ENCODE measurements at regions of chr20 and their contacts with region 1.

Region 1: GRCh38 chr20:47296950-47297349 is 59.5 kb downstream of the ZMYND8 start:
- DNase-seq: no peak
- H3K4me3 ChIP-seq: no peak overlapping the region
- H3K27ac ChIP-seq: no peak overlapping the region
- H3K4me1 ChIP-seq: no peaks in the 10 kb centered on the region
- H3K27me3 ChIP-seq: no peaks in the 10 kb centered on the region
- CTCF ChIP-seq: peak in 1 of 5 experiments; percentile 20
- EP300 ChIP-seq: no peak
- POLR2A ChIP-seq: no peak

Region 2: GRCh38 chr20:46674253-46675083 is 622.5 kb before region 1 on chr20:
- in situ Hi-C with region 1: no loop called
- intact Hi-C with region 1: loop called (anchors 10 kb)
- DNase-seq: no peak
- H3K4me3 ChIP-seq: no peak overlapping the region
- H3K27ac ChIP-seq: no peak overlapping the region
- H3K4me1 ChIP-seq: no peaks in the 10 kb centered on the region
- H3K27me3 ChIP-seq: no peaks in the 10 kb centered on the region
- CTCF ChIP-seq: no peak
- EP300 ChIP-seq: no peak
- POLR2A ChIP-seq: no peak

Region 3: DNA sequence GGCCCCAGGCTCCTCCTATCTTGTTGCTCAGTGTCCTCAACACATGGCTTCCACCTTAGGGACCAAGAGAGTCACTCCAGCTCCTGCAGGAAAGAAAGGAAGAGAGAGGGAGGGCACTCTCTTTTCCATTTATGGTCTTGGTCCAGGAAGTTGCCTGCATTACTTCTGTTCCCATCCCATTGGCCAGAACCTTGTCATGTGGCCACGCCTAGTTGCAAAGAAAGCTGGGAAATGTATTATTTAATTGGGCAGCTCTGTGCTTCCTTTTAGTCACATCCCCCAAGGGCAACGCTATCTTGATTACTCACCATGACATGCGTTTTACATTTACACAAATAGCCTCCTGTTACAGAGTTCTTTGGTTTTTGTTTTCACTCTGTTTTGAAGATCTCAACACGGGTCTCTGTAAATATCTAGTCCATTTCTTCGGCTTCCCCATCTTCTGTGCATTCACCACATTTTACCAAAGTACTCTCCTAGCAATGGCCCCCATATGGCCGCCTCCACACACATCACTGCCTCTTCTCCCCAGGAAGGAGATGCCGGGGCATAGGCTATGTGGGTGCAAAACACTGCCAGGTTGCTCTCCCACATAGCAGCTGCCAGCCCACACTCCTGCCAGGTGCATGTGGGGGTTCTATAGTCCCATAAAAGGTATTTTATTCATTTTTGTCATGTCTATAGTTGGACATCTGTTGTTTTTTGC is 95.2 kb after region 1 on chr20:
- in situ Hi-C with region 1: no loop called
- intact Hi-C with region 1: no loop called
- DNase-seq: no peak
- H3K4me3 ChIP-seq: no peak overlapping the region
- H3K27ac ChIP-seq: no peak overlapping the region
- H3K4me1 ChIP-seq: no peaks in the 10 kb centered on the region
- H3K27me3 ChIP-seq: no peaks in the 10 kb centered on the region
- CTCF ChIP-seq: no peak
- EP300 ChIP-seq: no peak
- POLR2A ChIP-seq: no peak

Measured in transverse colon (tissue), 4 donors.